Dorsolateral prefrontal cortex (tissue), 120 donors: ENCODE measurements at regions of chr18 and their contacts with region 1.

Region 1: GRCh38 chr18:712401-713134 is at the start of gene ENOSF1:
- DNase-seq: peak in 8 of 10 donors; percentile 21 to 81 (median 55)
- H3K4me3 ChIP-seq: peak within 1 kb of the TSS; percentile 38 to 90 (median 67)
- H3K27ac ChIP-seq: peak within 1 kb of the TSS in 57 of 59 donors; percentile 18 to 92 (median 77)
- H3K27me3 ChIP-seq: peaks cover 0 to 16% (median 0%) of the 10 kb centered on the region in 45 donors
- CTCF ChIP-seq: peak in 55 of 56 donors; percentile 12 to 89 (median 63)
- total RNA-seq, gene ENOSF1: 10.5 to 186 (median 42.7) TPM

Region 2: GRCh38 chr18:607930-608329 is 104.6 kb before region 1 on chr18:
- intact Hi-C with region 1: no loop called
- DNase-seq: no peak
- H3K4me3 ChIP-seq: no peak overlapping the region
- H3K27ac ChIP-seq: no peak overlapping the region
- H3K27me3 ChIP-seq: no peaks in the 10 kb centered on the region
- CTCF ChIP-seq: no peak

Region 3: DNA sequence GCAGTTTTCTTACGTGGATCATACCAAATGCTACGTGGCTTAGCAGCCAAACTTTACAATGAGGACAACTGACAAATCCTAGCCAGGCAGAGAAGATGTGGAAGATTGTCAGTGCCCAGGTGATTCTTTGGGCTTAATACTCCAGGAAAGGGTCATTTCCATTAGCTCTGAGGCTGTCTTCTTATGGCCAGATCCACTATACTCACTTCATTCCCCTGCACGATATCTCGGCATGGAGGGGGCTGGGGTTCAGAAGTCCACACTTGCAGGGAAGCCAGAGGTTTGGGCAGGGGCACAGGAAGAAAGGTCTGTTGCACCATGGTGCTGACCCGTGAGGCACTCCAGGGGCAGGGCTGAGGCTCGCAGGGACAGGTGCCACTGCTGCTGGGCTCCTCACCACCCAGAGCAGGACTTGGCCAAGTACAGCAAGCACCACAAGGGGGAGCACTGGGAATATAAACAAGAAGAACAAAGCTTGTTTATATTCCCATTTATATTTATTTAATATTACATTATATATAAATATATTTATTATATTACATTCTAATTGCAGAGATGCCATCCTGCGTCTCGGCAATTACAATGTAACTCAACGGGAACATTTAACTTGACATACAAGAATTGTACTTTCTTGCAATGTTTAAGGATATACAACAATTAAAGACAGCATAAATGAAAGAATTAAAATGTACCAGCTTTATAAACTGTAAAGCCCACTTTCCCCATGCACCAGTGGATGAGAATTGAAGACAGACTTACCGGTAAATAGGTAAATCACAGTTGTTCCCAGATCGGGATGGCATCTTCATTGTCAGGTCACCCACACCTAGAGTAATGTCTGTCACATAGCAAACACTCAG is 88.6 kb before region 1 on chr18:
- intact Hi-C with region 1: loop called (anchors 2 to 5 kb)
- DNase-seq: peak; percentile 13 to 84 (median 72)
- H3K4me3 ChIP-seq: peak overlapping the region in 4 of 59 donors; percentile 10 to 15 (median 14)
- H3K27ac ChIP-seq: peak overlapping the region in 40 of 59 donors; percentile 4 to 78 (median 54)
- H3K27me3 ChIP-seq: peaks cover 0 to 4% (median 0%) of the 10 kb centered on the region in 45 donors
- CTCF ChIP-seq: peak; percentile 58 to 95 (median 84)

Region 4: DNA sequence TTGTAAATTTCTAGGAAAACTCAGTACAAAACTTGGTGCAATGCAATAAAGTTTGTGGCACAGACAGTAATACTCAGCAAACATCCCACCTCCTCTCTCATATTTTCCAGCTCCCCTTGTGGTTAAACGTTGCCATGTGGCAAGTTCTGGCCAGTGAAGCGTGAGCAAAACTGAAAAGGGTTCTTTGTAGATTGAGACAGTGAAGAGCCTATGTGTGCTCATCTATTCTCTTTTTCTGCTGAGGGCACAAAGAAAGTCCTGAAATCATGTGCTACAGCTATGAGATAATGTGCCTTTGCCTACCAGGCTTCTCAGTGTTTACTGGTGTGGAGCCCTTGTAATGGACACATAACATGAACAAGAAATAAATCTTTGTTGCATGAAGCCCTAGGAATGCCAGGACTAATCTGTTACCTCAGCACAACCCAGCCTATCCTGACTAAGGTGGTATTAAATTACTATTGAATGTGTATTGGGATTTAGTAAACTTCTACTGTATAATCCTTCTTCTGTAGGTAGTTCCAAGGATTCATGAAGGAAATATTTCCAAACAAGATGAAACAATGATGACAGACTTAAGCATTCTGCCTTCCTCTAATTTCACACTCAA is 68.1 kb before region 1 on chr18:
- intact Hi-C with region 1: loop called in 1 of 2 experiments (anchors 5 kb)
- DNase-seq: peak in 3 of 10 donors; percentile 42 to 64 (median 63)
- H3K4me3 ChIP-seq: peak overlapping the region in 10 of 59 donors; percentile 0 to 33 (median 11)
- H3K27ac ChIP-seq: peak overlapping the region; percentile 44 to 100 (median 98)
- H3K27me3 ChIP-seq: peaks cover 0 to 10% (median 0%) of the 10 kb centered on the region in 45 donors
- CTCF ChIP-seq: peak in 39 of 56 donors; percentile 10 to 56 (median 31)

Region 5: GRCh38 chr18:658001-658946 is 54.3 kb before region 1 on chr18:
- intact Hi-C with region 1: loop called in 1 of 2 experiments (anchors 10 kb)
- DNase-seq: peak; percentile 35 to 88 (median 84)
- H3K4me3 ChIP-seq: peak overlapping the region; percentile 56 to 92 (median 78)
- H3K27ac ChIP-seq: peak overlapping the region in 58 of 59 donors; percentile 30 to 99 (median 88)
- H3K27me3 ChIP-seq: peaks cover 0 to 50% (median 11%) of the 10 kb centered on the region in 45 donors
- CTCF ChIP-seq: peak in 5 of 56 donors; percentile 9 to 26 (median 15)